ENCODE measurements at regions of chr1 and their contacts with region 1.

Region 1: GRCh38 chr1:16055613-16056520 is 12.3 kb downstream of the CLCNKB start:
- DNase-seq: peak; percentile 89 to 94
- ATAC-seq: peak; percentile 81
- H3K4me3 ChIP-seq: no peak overlapping the region
- H3K27ac ChIP-seq: no peak overlapping the region
- H3K4me1 ChIP-seq: no peaks in the 10 kb centered on the region
- H3K27me3 ChIP-seq: no peaks in the 10 kb centered on the region

Region 2: GRCh38 chr1:16032388-16033103 is 23.3 kb before region 1 on chr1:
- intact Hi-C with region 1: loop called in 1 of 2 experiments (anchors 2 kb)
- DNase-seq: peak; percentile 90 to 95
- ATAC-seq: peak; percentile 94
- H3K4me3 ChIP-seq: no peak overlapping the region
- H3K27ac ChIP-seq: no peak overlapping the region
- H3K4me1 ChIP-seq: no peaks in the 10 kb centered on the region
- H3K27me3 ChIP-seq: no peaks in the 10 kb centered on the region